Sciatic nerve (tissue), 2 donors: ENCODE measurements at regions of chr2 and their contacts with region 1.

Region 1: DNA sequence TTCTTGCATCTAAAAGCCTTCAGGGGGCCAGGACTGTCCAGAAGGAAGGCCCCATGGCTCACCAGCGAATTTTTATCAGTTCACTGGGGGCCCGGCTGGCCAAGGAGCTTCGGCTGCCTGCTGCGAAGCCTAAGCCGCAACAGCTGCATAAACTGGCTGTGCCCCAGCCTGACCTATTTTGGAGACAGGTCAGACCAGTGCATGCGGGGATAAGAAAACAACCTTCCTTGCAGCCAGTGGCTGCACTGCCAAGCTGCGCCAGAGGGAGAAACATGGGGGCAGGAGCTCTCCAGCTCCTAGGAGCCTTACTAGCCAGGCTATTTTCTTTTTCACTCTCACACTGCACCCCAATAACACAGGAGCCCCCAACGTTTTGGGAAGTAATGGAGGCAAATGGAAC is 15.2 kb downstream of the PAX3 start:
- DNase-seq: no peak
- ATAC-seq: no peak

Region 2: GRCh38 chr2:224058048-224058775 is 1774.6 kb after region 1 on chr2:
- intact Hi-C with region 1: loop called (anchors 5 kb)
- DNase-seq: no peak
- ATAC-seq: no peak